ENCODE measurements at regions of chr2 and their contacts with region 1.

Region 1: DNA sequence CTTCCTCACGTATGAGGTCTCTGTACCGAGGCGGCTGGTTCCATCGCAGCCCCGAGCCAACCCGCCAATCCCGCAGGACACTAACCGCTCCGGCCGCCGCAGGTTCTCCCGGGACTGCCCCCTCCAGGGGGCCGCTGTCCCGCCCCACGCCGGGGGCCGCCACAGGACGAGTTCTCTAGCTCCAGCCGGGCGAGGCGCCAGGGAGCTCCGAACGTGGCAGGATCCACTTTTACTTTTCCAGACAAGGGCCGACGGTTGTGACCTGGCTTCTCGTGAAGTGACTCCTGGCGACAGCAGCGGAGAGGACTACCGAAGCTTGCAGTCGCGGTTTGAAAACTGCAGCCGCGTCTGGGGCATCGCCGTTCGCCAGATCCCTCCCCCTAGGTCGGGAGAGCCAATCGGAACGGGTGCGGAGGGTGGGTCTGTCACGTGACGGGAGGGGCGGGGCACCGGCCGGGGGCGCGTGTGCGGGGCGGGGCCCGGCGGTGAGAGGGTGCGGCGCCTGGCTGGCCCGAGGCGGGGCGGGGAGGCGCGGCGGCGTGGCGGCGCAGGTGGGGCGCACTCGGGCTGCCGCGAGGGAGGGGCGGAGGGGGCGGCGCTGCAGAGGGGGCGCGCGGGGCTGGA is at the start of gene STK17B:
- DNase-seq: peak; percentile 98
- H3K4me3 Mint-ChIP-seq: peak within 1 kb of the TSS; percentile 93
- H3K27ac Mint-ChIP-seq: peak within 1 kb of the TSS; percentile 92
- H3K4me1 Mint-ChIP-seq: peaks cover 34% of the 10 kb centered on the region
- H3K27me3 Mint-ChIP-seq: no peaks in the 10 kb centered on the region
- total RNA-seq, gene STK17B: 141 to 143 TPM

Region 2: DNA sequence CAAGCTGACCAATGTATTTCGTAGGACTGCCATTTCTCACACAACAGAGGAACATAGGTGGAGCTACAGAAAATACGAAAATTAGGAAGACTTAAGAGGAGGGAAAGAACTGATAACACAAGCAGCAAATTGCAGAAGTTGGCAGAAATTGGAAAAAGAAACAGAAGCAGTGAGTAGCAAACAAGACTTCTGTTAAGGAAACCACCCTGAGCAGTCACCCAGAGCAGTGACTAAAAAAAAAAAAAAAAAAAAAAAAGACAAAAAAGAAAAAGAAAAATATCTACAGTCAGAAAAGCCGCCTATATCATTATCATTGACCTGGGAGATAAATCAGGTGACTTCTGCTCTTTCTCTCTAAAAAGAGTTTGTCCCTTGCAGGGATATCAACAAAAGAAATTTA is 21.4 kb before region 1 on chr2:
- CTCF ChIA-PET with region 1: interaction called, 3 read pairs
- intact Hi-C with region 1: loop called (anchors 1 kb)
- DNase-seq: no peak
- H3K4me3 Mint-ChIP-seq: peak overlapping the region; percentile 36
- H3K27ac Mint-ChIP-seq: peak overlapping the region; percentile 91
- H3K4me1 Mint-ChIP-seq: peaks cover 89% of the 10 kb centered on the region
- H3K27me3 Mint-ChIP-seq: no peaks in the 10 kb centered on the region

Region 3: GRCh38 chr2:196233021-196233804 is 61.9 kb after region 1 on chr2:
- CTCF ChIA-PET with region 1: interaction called, 8 read pairs
- intact Hi-C with region 1: loop called (anchors 1 kb)
- DNase-seq: peak; percentile 34
- H3K4me3 Mint-ChIP-seq: no peak overlapping the region
- H3K27ac Mint-ChIP-seq: peak overlapping the region; percentile 91
- H3K4me1 Mint-ChIP-seq: peaks cover 92% of the 10 kb centered on the region
- H3K27me3 Mint-ChIP-seq: no peaks in the 10 kb centered on the region

Region 4: DNA sequence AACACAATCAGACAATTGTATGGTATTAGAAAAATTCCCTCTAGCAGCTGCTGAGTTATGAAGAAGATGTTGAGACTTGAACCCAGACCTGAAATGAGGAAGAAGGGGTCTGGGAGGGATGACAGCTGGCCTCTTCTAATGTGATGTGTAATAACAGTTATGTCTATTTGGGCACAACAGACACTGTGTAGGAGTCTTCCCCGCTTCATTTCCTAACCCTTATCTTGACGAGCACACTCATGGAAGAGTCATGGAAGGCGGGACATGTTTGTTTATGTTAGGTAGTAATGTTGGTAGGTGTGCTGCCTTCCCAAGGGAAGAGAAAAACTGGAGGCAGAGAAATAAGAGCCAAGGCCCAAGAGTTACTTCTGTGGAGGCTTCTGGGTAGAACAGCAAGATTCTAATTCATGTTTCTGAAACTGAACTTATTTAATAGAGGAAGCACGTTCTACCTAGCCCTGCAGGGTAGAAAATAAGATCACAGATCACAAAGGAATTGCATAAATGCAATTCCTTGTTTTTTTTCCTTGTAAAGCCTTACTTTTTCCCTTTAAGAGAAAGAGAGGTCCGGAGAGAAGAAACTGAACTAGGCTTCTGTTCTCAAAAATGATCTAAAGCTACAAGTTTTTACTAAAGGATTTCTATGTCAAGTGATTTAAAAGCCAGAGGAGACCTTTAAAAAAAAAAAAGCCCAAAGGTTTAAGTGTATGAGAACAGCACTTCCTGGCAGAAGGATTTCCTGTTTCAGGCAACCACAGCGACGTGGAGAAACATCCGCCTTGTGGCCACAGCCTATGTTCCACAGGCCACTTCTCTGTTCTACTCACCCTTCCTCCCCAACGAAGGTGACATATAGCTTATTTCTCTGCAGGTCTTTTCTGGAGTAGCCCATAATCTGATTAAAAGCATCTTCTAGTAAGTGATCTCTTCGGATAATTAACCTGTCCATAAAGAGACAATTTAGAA is 68.5 kb after region 1 on chr2:
- CTCF ChIA-PET with region 1: interaction called, 6 read pairs
- intact Hi-C with region 1: loop called (anchors 1 kb)
- DNase-seq: peak; percentile 93
- H3K4me3 Mint-ChIP-seq: peak overlapping the region; percentile 49
- H3K27ac Mint-ChIP-seq: peak overlapping the region; percentile 88
- H3K4me1 Mint-ChIP-seq: peaks cover 85% of the 10 kb centered on the region
- H3K27me3 Mint-ChIP-seq: no peaks in the 10 kb centered on the region

Region 5: GRCh38 chr2:196268538-196269338 is 97.4 kb after region 1 on chr2:
- CTCF ChIA-PET with region 1: no interaction called
- intact Hi-C with region 1: no loop called
- DNase-seq: no peak
- H3K4me3 Mint-ChIP-seq: peak overlapping the region; percentile 52
- H3K27ac Mint-ChIP-seq: peak overlapping the region; percentile 65
- H3K4me1 Mint-ChIP-seq: peaks cover 64% of the 10 kb centered on the region
- H3K27me3 Mint-ChIP-seq: no peaks in the 10 kb centered on the region